ENCODE measurements at regions of chr18 and their contacts with region 1.

Region 1: GRCh38 chr18:3665780-3666525 is 216.0 kb downstream of the TGIF1 start:
- DNase-seq: peak; percentile 58 to 68
- ATAC-seq: peak; percentile 93 to 96
- H3K4me3 ChIP-seq: peak overlapping the region; percentile 16 to 42 (median 28)
- H3K27ac ChIP-seq: peak overlapping the region; percentile 2 to 44 (median 26)
- H3K4me1 ChIP-seq: peaks cover 0 to 5% of the 10 kb centered on the region in 2 donors
- H3K27me3 ChIP-seq: no peaks in the 10 kb centered on the region
- CTCF ChIP-seq: peak; percentile 89 to 94 (median 90)
- POLR2A ChIP-seq: no peak

Region 2: GRCh38 chr18:3281456-3282400 is 384.2 kb before region 1 on chr18:
- in situ Hi-C with region 1: loop called (anchors 5 kb)
- intact Hi-C with region 1: loop called (anchors 1 kb)
- DNase-seq: no peak
- ATAC-seq: peak; percentile 75 to 82
- H3K4me3 ChIP-seq: no peak overlapping the region
- H3K27ac ChIP-seq: no peak overlapping the region
- H3K4me1 ChIP-seq: peaks cover 9 to 10% of the 10 kb centered on the region in 2 donors
- H3K27me3 ChIP-seq: no peaks in the 10 kb centered on the region
- CTCF ChIP-seq: peak; percentile 68 to 87 (median 70)
- POLR2A ChIP-seq: no peak

Region 3: DNA sequence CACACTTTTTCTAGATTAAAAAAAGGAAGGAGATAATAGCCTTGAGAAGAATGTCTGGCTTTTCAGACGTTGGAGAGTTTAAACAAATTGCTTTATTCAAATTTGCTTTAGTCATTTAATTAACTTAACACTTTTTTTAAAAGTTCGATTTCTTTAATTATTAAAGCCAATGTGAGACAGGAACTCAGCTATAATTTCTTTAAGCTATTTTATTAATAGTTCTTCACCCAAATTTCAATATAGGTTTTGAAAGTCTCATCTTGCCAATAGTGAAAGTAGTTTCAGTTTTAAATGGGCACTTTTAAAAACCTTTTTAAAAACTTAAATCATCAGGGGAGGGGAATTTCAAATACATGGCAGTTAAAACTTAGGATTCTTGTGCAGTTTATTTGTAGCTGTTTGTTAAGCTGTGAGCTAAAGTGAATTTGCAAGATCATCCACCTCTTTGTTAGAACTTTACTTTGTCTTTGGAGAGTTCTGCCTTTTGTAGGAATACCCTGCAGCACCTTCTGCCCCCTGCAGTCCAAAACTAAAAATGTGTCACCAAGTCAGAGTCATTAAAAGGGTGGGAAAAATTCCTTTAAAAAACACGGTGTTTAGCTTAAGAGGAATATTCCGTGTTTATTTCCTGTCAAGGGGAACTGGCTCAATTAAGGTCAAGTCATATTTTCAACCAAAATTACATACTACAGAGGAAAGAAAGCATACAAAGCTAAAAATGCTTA is 211.4 kb before region 1 on chr18:
- in situ Hi-C with region 1: loop called in 2 of 4 experiments (anchors 10 kb)
- intact Hi-C with region 1: loop called (anchors 1 kb)
- DNase-seq: peak in 1 of 2 donors; percentile 30
- ATAC-seq: no peak
- H3K4me3 ChIP-seq: peak overlapping the region; percentile 71 to 97 (median 82)
- H3K27ac ChIP-seq: peak overlapping the region; percentile 98 to 99 (median 99)
- H3K4me1 ChIP-seq: peaks cover 34 to 39% of the 10 kb centered on the region in 2 donors
- H3K27me3 ChIP-seq: no peaks in the 10 kb centered on the region
- CTCF ChIP-seq: peak; percentile 52 to 79 (median 65)
- POLR2A ChIP-seq: no peak

Region 4: DNA sequence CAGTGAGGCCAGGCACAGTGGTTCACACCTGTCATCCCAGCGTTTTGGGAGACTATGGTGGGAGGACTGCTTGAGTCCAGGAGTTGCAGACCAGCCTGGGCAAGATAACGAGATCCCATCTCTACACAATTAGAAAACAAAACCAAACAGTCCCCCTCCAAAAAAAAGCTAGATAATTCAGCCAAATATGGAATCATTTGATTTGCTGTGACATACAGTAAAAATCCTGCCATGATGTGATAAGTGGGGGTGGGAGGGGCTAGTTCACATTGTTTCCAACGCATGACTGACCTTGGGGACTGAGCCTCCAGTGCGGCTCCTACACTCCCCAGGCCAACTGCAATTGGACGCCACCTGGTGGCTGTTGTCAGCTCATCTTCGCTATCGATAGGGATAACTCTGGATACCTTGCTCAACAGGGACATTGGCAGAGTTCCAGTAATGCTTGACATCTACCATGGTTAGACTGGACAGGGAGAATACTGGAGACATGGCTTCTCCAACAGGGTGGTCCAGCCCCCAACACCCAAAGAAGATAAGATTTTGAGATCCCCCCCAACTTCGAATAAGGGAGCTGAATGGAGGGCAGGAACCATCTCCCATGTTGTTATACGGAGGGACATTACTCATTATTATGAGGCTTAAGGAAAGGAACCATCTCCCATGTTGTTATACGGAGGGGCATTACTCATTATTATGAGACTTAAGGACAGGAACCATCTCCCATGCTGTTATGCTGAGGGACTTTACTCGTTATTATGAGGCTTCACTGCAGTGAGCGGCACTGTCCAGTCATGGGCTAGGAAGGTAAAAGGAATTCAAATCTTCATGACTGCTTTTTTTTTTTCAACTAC is 80.1 kb before region 1 on chr18:
- in situ Hi-C with region 1: loop called in 2 of 4 experiments (anchors 5 to 10 kb)
- intact Hi-C with region 1: no loop called
- DNase-seq: peak; percentile 51 to 66
- ATAC-seq: peak; percentile 75 to 81
- H3K4me3 ChIP-seq: no peak overlapping the region
- H3K27ac ChIP-seq: no peak overlapping the region
- H3K4me1 ChIP-seq: no peaks in the 10 kb centered on the region
- H3K27me3 ChIP-seq: no peaks in the 10 kb centered on the region
- CTCF ChIP-seq: peak; percentile 40 to 79 (median 76)
- POLR2A ChIP-seq: no peak

Measured in gastrocnemius medialis (tissue), 4 donors.